ENCODE measurements at regions of chr1 and their contacts with region 1.

Region 1: DNA sequence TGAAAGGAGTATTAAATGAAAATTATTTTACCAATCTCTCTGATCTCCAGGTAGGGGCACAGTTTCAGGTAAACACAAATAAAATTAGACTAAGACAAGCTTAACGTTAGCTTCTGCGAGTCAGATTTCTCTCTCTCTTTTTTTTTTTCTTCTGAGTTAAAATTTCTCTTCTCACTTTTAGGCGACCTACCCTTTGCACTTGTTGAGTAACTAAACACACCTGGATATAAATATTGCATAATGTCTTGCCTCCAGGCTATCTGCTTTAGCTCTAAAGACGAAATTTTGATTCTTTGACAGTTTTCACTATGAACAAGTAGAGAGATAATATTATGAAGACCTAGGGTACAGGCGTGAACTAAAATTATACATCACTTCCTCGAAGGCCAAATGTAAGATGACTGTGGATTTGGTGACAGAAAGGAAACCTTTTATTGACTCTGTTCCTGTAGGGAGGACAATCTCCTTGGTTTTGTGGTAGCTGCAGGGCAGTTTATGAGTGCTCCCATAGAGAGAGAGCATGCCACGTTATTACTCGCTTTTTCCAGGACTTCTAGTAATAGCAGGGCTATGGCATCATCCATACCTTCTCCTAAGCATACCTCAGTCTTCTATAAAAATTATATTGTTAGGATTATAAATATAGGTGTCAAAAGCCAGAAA is 303.8 kb upstream of the NEGR1 start:
- DNase-seq: no peak
- ATAC-seq: no peak
- H3K4me3 ChIP-seq: no peak overlapping the region
- H3K27ac ChIP-seq: no peak overlapping the region
- H3K4me1 ChIP-seq: no peaks in the 10 kb centered on the region
- H3K27me3 ChIP-seq: no peaks in the 10 kb centered on the region
- CTCF ChIP-seq: no peak
- POLR2A ChIP-seq: no peak
- RAD21 ChIP-seq: no peak

Region 2: GRCh38 chr1:72336776-72337175 is 249.4 kb before region 1 on chr1:
- CTCF ChIA-PET with region 1: no interaction called
- POLR2A ChIA-PET with region 1: no interaction called
- RAD21 ChIA-PET with region 1: no interaction called
- intact Hi-C with region 1: loop called (anchors 5 kb)
- DNase-seq: no peak
- ATAC-seq: no peak
- H3K4me3 ChIP-seq: no peak overlapping the region
- H3K27ac ChIP-seq: no peak overlapping the region
- H3K4me1 ChIP-seq: no peaks in the 10 kb centered on the region
- H3K27me3 ChIP-seq: no peaks in the 10 kb centered on the region
- CTCF ChIP-seq: no peak
- POLR2A ChIP-seq: no peak
- RAD21 ChIP-seq: no peak